ENCODE measurements at regions of chr22 and their contacts with region 1.

Region 1: GRCh38 chr22:23281406-23282088 is 101.2 kb downstream of the BCR start:
- DNase-seq: peak; percentile 93
- H3K4me3 Mint-ChIP-seq: peak overlapping the region; percentile 48
- H3K27ac Mint-ChIP-seq: peak overlapping the region; percentile 92
- H3K4me1 Mint-ChIP-seq: peaks cover 38% of the 10 kb centered on the region
- H3K27me3 Mint-ChIP-seq: no peaks in the 10 kb centered on the region
- CTCF ChIP-seq: peak; percentile 93

Region 2: DNA sequence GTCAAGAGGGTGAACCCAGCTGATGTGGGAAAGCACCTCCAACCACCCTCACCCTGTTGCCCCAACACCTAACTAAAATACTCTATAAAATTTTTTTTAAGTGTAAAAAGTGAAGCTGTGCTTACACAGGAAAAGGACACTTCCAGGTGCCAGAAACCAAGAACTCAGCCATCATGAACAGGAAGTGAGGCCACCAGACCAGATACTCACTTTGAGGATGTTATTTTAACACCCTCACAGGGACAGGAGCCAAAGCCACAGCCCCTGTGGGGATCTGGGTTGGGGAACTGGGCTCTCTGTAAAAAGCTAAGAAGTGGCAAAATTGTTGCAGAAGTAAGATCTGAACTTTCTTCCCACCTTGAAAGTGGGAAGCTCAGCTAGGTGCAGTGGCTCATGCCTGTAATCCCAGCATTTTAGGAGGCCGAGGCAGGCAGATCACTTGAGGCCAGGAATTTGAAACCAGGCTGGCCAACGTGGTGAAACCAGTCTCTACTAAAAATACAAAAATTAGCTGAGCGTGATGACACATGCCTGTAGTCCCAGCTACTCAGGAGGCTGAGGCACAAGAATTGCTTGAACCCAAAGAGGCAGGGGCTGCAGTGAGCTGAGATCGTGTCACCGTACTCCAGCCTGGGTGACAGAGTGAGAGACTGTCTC is 143.5 kb before region 1 on chr22:
- CTCF ChIA-PET with region 1: no interaction called
- intact Hi-C with region 1: no loop called
- DNase-seq: no peak
- H3K4me3 Mint-ChIP-seq: no peak overlapping the region
- H3K27ac Mint-ChIP-seq: no peak overlapping the region
- H3K4me1 Mint-ChIP-seq: peaks cover 22% of the 10 kb centered on the region
- H3K27me3 Mint-ChIP-seq: no peaks in the 10 kb centered on the region
- CTCF ChIP-seq: no peak

Region 3: GRCh38 chr22:23225724-23226496 is 55.6 kb before region 1 on chr22:
- CTCF ChIA-PET with region 1: interaction called, 11 read pairs
- intact Hi-C with region 1: no loop called
- DNase-seq: peak; percentile 81
- H3K4me3 Mint-ChIP-seq: peak overlapping the region; percentile 14
- H3K27ac Mint-ChIP-seq: peak overlapping the region; percentile 48
- H3K4me1 Mint-ChIP-seq: peaks cover 60% of the 10 kb centered on the region
- H3K27me3 Mint-ChIP-seq: no peaks in the 10 kb centered on the region
- CTCF ChIP-seq: no peak

Measured in Calu3 (cell line).